ENCODE measurements at regions of chr6 and their contacts with region 1.

Region 1: DNA sequence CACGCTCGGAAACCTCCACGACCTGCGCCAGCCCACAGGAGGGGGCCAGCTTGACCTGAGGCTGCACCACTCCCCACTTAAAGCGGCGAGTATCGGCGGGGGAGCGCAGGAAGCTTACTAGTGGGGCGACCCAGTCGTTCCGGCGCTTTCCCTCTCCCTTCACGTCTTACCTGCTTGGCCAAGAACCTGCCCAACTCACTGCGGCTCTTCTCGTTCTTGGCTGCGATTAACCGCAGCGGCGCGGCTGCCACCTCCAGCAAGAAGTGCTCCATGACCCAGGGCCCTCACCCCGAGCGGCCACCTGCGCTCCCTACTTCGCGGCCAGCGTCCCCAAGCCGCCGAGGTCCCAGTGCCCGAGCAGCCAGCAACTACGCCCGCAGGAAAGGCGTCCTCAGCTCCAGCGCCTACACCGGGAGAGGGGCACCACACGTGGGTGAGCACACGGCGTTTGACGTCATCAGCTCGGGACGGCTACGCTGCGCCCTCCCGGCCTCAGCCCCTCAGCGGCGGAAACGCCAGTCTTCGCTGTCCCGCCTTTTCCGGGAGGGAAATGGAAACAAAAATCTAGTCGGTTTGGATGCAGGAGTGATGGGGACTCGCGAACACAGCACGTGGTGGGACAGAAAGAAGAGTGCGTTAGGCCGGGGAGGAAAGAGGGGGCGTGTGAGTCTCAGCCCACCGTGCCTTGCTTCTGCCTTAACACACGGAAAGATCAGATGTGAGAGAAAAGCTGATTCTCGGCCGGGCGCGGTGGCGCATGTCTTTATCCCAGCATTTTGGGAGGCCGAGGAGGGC is at the start of gene MDN1:
- DNase-seq: peak; percentile 91
- ATAC-seq: peak; percentile 78
- H3K4me3 Mint-ChIP-seq: peak within 1 kb of the TSS; percentile 92
- H3K27ac Mint-ChIP-seq: peak within 1 kb of the TSS; percentile 98
- H3K4me1 Mint-ChIP-seq: peaks cover 43% of the 10 kb centered on the region
- H3K27me3 Mint-ChIP-seq: no peaks in the 10 kb centered on the region
- CTCF ChIP-seq: no peak
- total RNA-seq, gene MDN1: 146 to 195 TPM (median 146 TPM) in 3 replicates

Region 2: DNA sequence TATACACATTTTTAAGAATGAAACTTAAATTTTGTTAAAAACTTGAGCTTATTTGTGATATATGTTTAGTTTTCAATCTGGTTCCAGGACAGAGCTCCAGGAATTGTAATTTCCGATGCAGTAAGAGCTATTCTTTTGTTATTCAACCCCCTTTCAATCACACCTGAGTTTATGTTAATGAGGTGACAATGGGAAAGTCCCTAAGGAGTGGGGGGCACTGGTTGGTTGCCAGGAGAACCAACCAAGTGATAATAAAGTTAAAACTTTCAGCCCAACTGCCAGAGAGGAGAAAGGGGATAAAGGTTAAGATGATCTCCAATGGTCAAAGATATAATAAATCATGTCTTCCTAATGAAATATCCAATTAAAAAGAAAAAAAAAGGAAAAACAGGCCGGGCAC is 19.8 kb before region 1 on chr6:
- CTCF ChIA-PET with region 1: interaction called, 5 read pairs
- POLR2A ChIA-PET with region 1: interaction called, 12 read pairs
- DNase-seq: no peak
- ATAC-seq: peak; percentile 82
- H3K4me3 Mint-ChIP-seq: peak overlapping the region; percentile 31; the same call in 1 of the 2 replicates
- H3K27ac Mint-ChIP-seq: peak overlapping the region; percentile 95
- H3K4me1 Mint-ChIP-seq: peaks cover 60% of the 10 kb centered on the region
- H3K27me3 Mint-ChIP-seq: no peaks in the 10 kb centered on the region
- CTCF ChIP-seq: no peak

Region 3: DNA sequence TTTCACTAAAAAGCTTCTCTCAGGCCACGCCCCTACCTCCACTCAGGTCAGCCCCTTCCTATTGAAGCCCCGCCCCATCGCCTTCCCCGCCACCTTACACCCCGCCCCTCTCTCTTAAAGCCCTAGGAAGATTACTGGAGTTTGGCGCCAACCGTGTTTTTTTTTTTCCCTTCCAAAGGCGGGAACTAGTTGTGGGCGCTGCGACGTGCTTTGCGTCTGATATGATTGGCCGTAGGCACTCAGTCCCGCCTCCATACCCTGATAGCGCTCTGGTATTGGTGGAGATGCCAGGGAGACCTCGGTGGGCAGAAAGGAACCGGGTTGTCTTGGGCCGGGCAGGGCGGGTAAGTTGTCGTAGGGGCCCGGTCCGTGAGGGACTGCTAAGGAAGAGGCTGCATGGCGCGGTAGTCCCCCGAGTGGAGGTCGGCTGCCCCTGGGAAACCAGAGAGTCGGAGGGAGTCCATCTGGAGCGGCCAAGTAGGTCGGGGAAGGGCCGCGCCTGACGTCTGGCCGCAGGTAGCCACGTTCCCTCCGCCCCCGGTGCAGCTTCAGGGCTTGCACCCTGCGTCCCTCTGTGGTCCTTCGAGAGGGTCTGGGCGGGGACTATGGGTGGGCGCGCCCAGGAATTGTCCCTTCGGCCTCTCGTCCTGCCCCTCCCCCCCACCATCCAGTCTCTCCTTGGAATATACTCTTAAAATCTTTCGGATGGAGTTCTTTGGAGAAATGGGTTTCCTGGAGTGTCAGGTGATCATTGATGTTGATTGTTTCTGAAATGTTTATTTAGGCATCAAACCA is 10.3 kb after region 1 on chr6 and contains the start of gene CASP8AP2:
- CTCF ChIA-PET with region 1: interaction called, 19 read pairs
- POLR2A ChIA-PET with region 1: interaction called, 33 read pairs
- DNase-seq: peak; percentile 92
- ATAC-seq: peak; percentile 98
- H3K4me3 Mint-ChIP-seq: peak within 1 kb of the TSS; percentile 95
- H3K27ac Mint-ChIP-seq: peak within 1 kb of the TSS; percentile 98
- H3K4me1 Mint-ChIP-seq: peaks cover 16% of the 10 kb centered on the region
- H3K27me3 Mint-ChIP-seq: no peaks in the 10 kb centered on the region
- CTCF ChIP-seq: no peak
- total RNA-seq, gene CASP8AP2: 24.2 to 27.9 TPM (median 25.0 TPM) in 3 replicates

Region 4: DNA sequence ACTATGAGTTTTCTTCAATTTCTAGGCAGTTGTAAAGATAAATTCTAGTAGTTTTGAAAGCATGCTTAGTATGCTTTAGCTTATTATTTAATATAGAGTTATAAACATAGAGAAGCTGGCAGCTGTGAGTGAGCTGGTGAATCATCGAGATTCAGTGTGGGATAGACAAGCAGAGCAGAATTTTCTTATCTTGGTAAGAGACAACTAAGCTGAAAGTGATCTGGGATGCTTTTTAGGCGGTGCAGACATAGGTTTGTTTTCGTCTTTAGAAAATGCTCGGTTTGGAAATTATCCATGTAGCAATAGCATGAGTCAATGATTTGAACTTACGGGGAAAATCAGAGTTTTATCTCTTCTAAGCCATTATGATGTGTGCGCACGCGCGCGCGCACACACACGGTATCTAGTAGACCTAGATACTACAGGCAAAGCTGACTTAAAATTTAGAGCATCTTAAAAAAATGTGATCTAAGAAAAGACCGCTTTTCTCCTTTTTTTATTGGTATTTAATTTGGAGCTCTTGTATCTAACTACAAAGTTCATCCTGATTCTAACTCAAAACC is 895.6 kb after region 1 on chr6:
- CTCF ChIA-PET with region 1: no interaction called
- POLR2A ChIA-PET with region 1: no interaction called
- DNase-seq: no peak
- ATAC-seq: no peak
- H3K4me3 Mint-ChIP-seq: no peak overlapping the region
- H3K27ac Mint-ChIP-seq: no peak overlapping the region
- H3K4me1 Mint-ChIP-seq: peaks cover 18% of the 10 kb centered on the region
- H3K27me3 Mint-ChIP-seq: no peaks in the 10 kb centered on the region
- CTCF ChIP-seq: no peak

Measured in WTC11 (cell line).